ENCODE measurements at regions of chr5 and their contacts with region 1.

Region 1: GRCh38 chr5:170434966-170435605 is 45.9 kb upstream of the KCNMB1 start:
- DNase-seq: peak; percentile 52 to 70
- ATAC-seq: peak; percentile 60 to 80 (median 70)
- H3K4me3 ChIP-seq: no peak overlapping the region
- H3K27ac ChIP-seq: no peak overlapping the region
- H3K4me1 ChIP-seq: no peaks in the 10 kb centered on the region
- H3K27me3 ChIP-seq: peaks cover 0 to 5% (median 0%) of the 10 kb centered on the region in 3 donors
- CTCF ChIP-seq: peak; percentile 89

Region 2: GRCh38 chr5:170092455-170093101 is 342.5 kb before region 1 on chr5:
- intact Hi-C with region 1: no loop called
- DNase-seq: no peak
- ATAC-seq: no peak
- H3K4me3 ChIP-seq: no peak overlapping the region
- H3K27ac ChIP-seq: no peak overlapping the region
- H3K4me1 ChIP-seq: no peaks in the 10 kb centered on the region
- H3K27me3 ChIP-seq: no peaks in the 10 kb centered on the region
- CTCF ChIP-seq: no peak

Region 3: DNA sequence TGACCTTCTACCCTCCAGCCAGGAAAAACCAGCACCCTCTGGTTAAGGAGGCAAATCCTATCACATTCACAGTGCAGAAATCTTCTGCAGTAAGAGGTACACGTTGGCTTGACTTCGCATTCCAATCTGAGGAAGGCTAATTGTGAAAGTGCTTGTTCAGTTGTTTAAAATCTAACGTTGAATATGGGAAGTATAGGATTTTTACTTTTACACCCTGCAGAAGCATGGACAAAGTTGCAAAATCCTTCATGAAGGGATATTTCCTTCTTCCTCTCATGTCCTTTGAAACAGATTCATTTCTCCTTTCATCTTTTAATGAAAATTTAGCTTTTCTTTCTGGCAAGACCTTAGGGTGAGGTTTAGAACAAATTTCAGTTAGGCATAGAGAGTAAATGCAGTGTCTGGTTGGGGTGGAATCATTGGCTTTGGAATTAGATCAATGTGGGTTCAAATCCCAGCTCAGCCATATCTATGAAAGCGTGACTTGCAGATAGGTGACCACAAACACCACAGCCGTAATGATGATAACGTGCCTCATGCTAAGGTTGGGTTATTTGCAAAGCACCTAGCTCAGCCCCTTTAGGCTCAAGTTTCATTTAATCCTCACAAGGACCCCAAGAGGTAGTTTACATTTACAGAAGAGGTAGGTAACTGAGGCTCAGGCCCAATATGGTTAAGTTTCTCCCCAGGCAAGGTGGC is 244.5 kb before region 1 on chr5:
- intact Hi-C with region 1: no loop called
- DNase-seq: no peak
- ATAC-seq: no peak
- H3K4me3 ChIP-seq: no peak overlapping the region
- H3K27ac ChIP-seq: no peak overlapping the region
- H3K4me1 ChIP-seq: no peaks in the 10 kb centered on the region
- H3K27me3 ChIP-seq: no peaks in the 10 kb centered on the region
- CTCF ChIP-seq: no peak

Region 4: GRCh38 chr5:170225326-170226128 is 209.6 kb before region 1 on chr5:
- intact Hi-C with region 1: loop called in 1 of 2 experiments (anchors 5 kb)
- DNase-seq: peak; percentile 57 to 78
- ATAC-seq: peak in 3 of 4 donors; percentile 38 to 74 (median 58)
- H3K4me3 ChIP-seq: no peak overlapping the region
- H3K27ac ChIP-seq: no peak overlapping the region
- H3K4me1 ChIP-seq: no peaks in the 10 kb centered on the region
- H3K27me3 ChIP-seq: no peaks in the 10 kb centered on the region
- CTCF ChIP-seq: peak; percentile 59

Region 5: DNA sequence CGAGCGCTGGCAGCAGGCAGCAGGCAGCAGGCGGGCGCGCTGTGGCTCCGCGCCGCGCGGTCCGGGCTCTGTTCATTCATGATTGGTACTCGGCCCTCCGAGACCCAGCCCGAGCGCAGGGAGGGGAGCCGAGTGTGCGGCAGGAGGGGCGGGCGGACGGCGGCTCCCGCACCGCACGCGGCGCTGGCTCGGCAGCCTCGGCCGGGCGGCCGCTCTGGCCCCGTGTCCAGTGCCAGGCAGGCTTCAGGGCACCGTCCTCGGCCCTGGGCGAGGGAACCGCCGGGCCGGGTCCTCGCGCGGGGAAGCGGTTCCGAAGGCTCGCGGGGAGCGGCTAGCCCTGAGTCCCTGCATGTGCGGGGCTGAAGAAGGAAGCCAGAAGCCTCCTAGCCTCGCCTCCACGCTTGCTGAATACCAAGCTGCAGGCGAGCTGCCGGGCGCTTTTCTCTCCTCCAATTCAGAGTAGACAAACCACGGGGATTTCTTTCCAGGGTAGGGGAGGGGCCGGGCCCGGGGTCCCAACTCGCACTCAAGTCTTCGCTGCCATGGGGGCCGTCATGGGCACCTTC is 69.0 kb after region 1 on chr5:
- intact Hi-C with region 1: no loop called
- DNase-seq: no peak
- ATAC-seq: peak in 1 of 4 donors; percentile 33
- H3K4me3 ChIP-seq: peak overlapping the region; percentile 46
- H3K27ac ChIP-seq: no peak overlapping the region
- H3K4me1 ChIP-seq: no peaks in the 10 kb centered on the region
- H3K27me3 ChIP-seq: peaks cover 0 to 44% (median 15%) of the 10 kb centered on the region in 3 donors
- CTCF ChIP-seq: no peak

Region 6: GRCh38 chr5:170623576-170624181 is 188.6 kb after region 1 on chr5:
- intact Hi-C with region 1: loop called in 1 of 2 experiments (anchors 2 kb)
- DNase-seq: no peak
- ATAC-seq: no peak
- H3K4me3 ChIP-seq: no peak overlapping the region
- H3K27ac ChIP-seq: no peak overlapping the region
- H3K4me1 ChIP-seq: no peaks in the 10 kb centered on the region
- H3K27me3 ChIP-seq: peaks cover 0 to 6% (median 0%) of the 10 kb centered on the region in 3 donors
- CTCF ChIP-seq: peak; percentile 38

Region 7: DNA sequence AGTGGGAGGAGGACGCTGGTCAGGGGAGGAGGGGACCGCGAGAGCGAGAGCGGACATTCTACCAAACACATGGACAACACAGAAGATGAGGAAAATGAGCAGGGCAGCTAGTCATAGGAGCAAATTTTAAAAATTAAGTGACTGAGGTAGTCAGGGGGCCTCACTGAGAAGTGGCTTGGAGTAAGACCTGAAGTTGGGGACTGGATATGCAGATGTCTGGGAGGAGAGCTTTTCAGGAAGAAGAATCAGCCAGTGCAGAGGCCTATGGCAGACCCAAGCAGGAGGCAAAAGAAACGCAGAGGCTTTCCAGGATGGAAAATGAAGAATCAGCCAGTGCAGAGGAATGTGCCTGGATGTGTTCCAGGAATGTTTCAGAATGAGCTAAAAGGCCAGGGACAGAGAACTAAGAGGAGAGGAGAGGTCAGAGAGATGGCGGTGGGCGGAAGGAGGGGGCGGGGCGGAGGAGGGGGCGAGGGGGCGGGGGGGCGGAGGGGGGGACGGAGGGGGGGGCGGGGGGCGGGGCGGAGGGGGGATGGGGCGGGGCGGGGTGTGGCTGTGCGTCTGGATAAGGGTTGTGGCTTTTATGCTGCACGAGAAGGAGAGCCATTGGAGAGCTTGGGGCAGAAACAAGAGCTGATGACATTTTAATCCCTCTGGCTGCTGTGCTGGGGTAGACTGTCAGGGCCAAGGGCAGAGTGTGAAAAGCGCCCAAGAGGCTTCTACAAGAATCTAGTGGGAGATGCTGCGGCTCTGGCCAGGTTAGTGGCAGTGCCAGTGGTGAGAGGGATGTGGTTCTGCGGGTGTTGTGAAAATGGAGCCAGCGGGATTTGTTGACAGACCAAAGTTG is 198.4 kb after region 1 on chr5:
- intact Hi-C with region 1: loop called (anchors 2 to 5 kb)
- DNase-seq: peak; percentile 52 to 66
- ATAC-seq: peak; percentile 23 to 68 (median 58)
- H3K4me3 ChIP-seq: peak overlapping the region; percentile 36
- H3K27ac ChIP-seq: peak overlapping the region; percentile 58
- H3K4me1 ChIP-seq: no peaks in the 10 kb centered on the region
- H3K27me3 ChIP-seq: peaks cover 0 to 4% (median 0%) of the 10 kb centered on the region in 3 donors
- CTCF ChIP-seq: no peak

Measured in psoas muscle (tissue), 8 donors.